Activated CD8-positive, alpha-beta T cell treated with anti-CD3 and anti-CD28 coated beads for 36 hours (primary cell): ENCODE measurements at regions of chr17 and their contacts with region 1.

Region 1: GRCh38 chr17:45410144-45411091 is 22.3 kb downstream of the ARHGAP27 start:
- DNase-seq: peak; percentile 79
- ATAC-seq: peak; percentile 85
- H3K4me3 Mint-ChIP-seq: peak overlapping the region; percentile 98
- H3K27ac Mint-ChIP-seq: peak overlapping the region; percentile 99
- H3K4me1 Mint-ChIP-seq: peaks cover 35% of the 10 kb centered on the region
- H3K27me3 Mint-ChIP-seq: no peaks in the 10 kb centered on the region
- CTCF ChIP-seq: no peak

Region 2: GRCh38 chr17:45284176-45285140 is 126.0 kb before region 1 on chr17:
- CTCF ChIA-PET with region 1: no interaction called
- POLR2A ChIA-PET with region 1: no interaction called
- intact Hi-C with region 1: no loop called
- DNase-seq: peak; percentile 65
- ATAC-seq: peak; percentile 60
- H3K4me3 Mint-ChIP-seq: no peak overlapping the region
- H3K27ac Mint-ChIP-seq: peak overlapping the region; percentile 86
- H3K4me1 Mint-ChIP-seq: peaks cover 25% of the 10 kb centered on the region
- H3K27me3 Mint-ChIP-seq: no peaks in the 10 kb centered on the region
- CTCF ChIP-seq: no peak

Region 3: DNA sequence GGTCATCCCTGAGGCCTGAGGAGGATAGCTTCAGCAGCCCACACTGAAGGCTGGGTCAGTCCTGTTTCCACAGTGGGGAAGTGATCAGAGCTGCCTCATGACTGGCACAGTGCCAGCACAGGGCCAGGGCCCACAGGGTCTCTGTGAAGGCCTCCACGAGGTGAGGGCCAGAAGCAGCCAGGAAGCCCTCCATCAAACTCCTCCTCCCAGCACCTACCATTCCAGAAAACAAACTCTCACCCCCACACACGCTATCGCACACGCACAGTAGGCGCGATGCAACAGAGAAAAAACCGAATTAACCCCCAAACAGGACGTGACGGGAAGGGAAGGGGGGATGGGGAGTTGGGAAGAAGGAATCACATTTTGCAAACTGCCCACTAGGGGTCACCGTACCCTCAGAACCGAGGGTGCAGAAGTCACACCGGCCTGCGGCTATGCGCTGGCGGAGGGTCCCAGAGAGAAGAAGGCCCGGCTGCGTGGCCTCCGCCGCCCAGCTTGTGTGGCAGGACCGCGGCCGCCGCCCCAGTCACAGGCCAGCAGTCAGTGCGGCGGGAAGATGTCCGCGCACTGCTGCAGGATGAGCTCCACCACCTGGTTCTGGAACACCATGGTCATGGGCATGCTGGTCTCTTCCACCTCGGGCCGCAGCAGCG is 15.4 kb before region 1 on chr17:
- CTCF ChIA-PET with region 1: interaction called, 3 read pairs
- POLR2A ChIA-PET with region 1: interaction called, 14 read pairs
- intact Hi-C with region 1: no loop called
- DNase-seq: peak; percentile 62
- ATAC-seq: peak; percentile 70
- H3K4me3 Mint-ChIP-seq: no peak overlapping the region
- H3K27ac Mint-ChIP-seq: peak overlapping the region; percentile 52
- H3K4me1 Mint-ChIP-seq: peaks cover 5% of the 10 kb centered on the region
- H3K27me3 Mint-ChIP-seq: no peaks in the 10 kb centered on the region
- CTCF ChIP-seq: peak; percentile 79

Region 4: GRCh38 chr17:45425125-45425983 is 14.9 kb after region 1 on chr17:
- CTCF ChIA-PET with region 1: interaction called, 7 read pairs
- POLR2A ChIA-PET with region 1: interaction called, 11 read pairs
- intact Hi-C with region 1: no loop called
- DNase-seq: no peak
- ATAC-seq: no peak
- H3K4me3 Mint-ChIP-seq: no peak overlapping the region
- H3K27ac Mint-ChIP-seq: no peak overlapping the region
- H3K4me1 Mint-ChIP-seq: peaks cover 10% of the 10 kb centered on the region
- H3K27me3 Mint-ChIP-seq: peaks cover 6% of the 10 kb centered on the region
- CTCF ChIP-seq: no peak